ENCODE measurements at regions of chr3 and their contacts with region 1.

Region 1: DNA sequence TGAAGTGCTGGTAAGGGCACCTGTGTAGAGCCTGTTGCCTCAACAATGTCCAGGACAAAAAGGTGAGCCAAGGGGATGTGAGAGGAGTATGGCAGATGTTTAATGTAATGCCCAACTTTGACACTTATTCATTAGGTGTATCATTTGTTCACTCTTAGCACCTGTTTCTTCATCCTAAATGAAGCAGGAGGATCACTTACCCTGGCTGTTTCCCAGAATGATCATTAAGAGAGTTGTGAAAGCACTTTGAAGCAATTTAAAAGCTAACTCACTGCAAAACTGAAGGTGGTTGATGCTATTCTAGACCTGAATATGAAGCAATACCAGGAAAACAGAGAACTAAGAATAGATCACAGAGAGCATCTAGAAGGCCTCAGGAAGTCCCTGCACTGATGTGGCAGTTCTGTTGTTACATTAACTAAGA is 3.4 kb upstream of the HHLA2 start:
- DNase-seq: peak; percentile 45
- H3K4me3 Mint-ChIP-seq: no peak overlapping the region
- H3K27ac Mint-ChIP-seq: peak overlapping the region; percentile 70
- H3K4me1 Mint-ChIP-seq: peaks cover 55% of the 10 kb centered on the region
- H3K27me3 Mint-ChIP-seq: no peaks in the 10 kb centered on the region

Region 2: GRCh38 chr3:107414325-107414964 is 878.5 kb before region 1 on chr3:
- CTCF ChIA-PET with region 1: no interaction called
- intact Hi-C with region 1: loop called (anchors 10 kb)
- DNase-seq: peak; percentile 14
- H3K4me3 Mint-ChIP-seq: no peak overlapping the region
- H3K27ac Mint-ChIP-seq: no peak overlapping the region
- H3K4me1 Mint-ChIP-seq: peaks cover 10% of the 10 kb centered on the region
- H3K27me3 Mint-ChIP-seq: no peaks in the 10 kb centered on the region

Region 3: DNA sequence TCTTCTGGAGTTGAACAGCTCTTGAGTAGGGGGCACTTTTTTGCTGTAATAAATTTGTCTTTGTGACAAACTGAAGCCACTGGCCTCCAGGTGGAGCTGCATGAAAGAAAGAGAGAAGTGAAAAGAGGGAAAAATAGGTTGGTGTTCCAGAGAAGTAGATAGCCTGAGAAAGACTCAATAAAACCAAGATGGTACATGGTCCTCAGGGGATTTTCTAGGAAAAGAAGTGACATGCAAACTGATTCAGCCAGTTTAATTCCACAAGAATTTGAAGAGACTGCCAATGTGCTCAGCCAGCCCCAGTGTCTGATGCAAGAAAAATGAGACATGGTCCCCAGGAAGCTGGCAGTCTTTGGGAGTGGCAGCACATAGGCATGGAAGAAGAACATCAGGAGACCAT is 354.8 kb before region 1 on chr3:
- CTCF ChIA-PET with region 1: no interaction called
- intact Hi-C with region 1: loop called (anchors 1 kb)
- DNase-seq: peak; percentile 21
- H3K4me3 Mint-ChIP-seq: no peak overlapping the region
- H3K27ac Mint-ChIP-seq: no peak overlapping the region
- H3K4me1 Mint-ChIP-seq: peaks cover 20% of the 10 kb centered on the region
- H3K27me3 Mint-ChIP-seq: no peaks in the 10 kb centered on the region

Region 4: GRCh38 chr3:108221911-108222852 is 70.7 kb before region 1 on chr3 and contains the start of gene IFT57:
- CTCF ChIA-PET with region 1: interaction called, 8 read pairs
- intact Hi-C with region 1: loop called (anchors 1 kb)
- DNase-seq: peak; percentile 95
- H3K4me3 Mint-ChIP-seq: peak within 1 kb of the TSS; percentile 97
- H3K27ac Mint-ChIP-seq: peak within 1 kb of the TSS; percentile 97
- H3K4me1 Mint-ChIP-seq: peaks cover 42% of the 10 kb centered on the region
- H3K27me3 Mint-ChIP-seq: no peaks in the 10 kb centered on the region
- total RNA-seq, gene IFT57: 26.2 to 27.7 TPM

Region 5: DNA sequence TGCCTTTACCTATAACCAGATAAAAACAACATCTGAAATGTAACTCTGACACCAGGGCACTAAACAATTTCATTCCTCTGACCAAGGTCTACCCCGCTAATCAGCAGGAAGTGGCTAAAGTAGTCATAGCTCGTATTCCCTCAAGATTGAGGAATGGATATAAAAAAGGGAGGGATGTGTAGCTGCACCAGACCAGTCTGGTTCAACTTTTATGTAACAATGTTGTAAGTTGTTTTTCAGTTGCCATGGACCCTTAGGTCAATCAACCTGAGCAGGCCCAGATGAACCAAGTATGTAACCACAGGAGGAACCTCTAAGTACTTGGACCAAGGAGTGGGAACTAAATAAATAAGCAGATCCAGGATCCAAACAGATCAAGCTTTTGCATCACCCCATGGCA is 42.3 kb before region 1 on chr3:
- CTCF ChIA-PET with region 1: no interaction called
- intact Hi-C with region 1: no loop called
- DNase-seq: no peak
- H3K4me3 Mint-ChIP-seq: no peak overlapping the region
- H3K27ac Mint-ChIP-seq: no peak overlapping the region
- H3K4me1 Mint-ChIP-seq: peaks cover 9% of the 10 kb centered on the region
- H3K27me3 Mint-ChIP-seq: no peaks in the 10 kb centered on the region

Region 6: DNA sequence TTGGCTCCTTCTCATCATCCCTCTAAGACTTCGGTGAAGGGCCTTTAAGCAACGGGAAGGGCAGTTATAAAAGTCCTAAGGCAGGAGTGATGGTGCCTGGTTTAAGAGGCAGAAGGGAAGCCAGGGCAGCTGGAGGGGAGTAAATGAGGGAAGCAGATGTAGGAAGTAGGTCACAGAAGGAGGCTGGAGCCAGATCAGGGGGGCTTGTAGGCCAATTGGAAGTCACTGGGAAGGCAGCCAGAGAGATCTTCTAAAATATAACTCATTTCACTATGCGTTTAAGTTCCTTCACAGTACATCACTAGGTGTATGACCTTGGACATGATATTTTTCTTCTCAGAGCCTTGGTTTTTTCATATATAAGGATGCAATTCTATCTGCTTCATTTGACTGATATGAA is 122.7 kb after region 1 on chr3:
- CTCF ChIA-PET with region 1: no interaction called
- intact Hi-C with region 1: loop called (anchors 1 kb)
- DNase-seq: no peak
- H3K4me3 Mint-ChIP-seq: no peak overlapping the region
- H3K27ac Mint-ChIP-seq: no peak overlapping the region
- H3K4me1 Mint-ChIP-seq: peaks cover 18% of the 10 kb centered on the region
- H3K27me3 Mint-ChIP-seq: peaks cover 12% of the 10 kb centered on the region

Region 7: GRCh38 chr3:109927161-109927560 is 1634.2 kb after region 1 on chr3:
- CTCF ChIA-PET with region 1: no interaction called
- intact Hi-C with region 1: loop called (anchors 5 kb)
- DNase-seq: peak; percentile 58
- H3K4me3 Mint-ChIP-seq: no peak overlapping the region
- H3K27ac Mint-ChIP-seq: no peak overlapping the region
- H3K4me1 Mint-ChIP-seq: peaks cover 12% of the 10 kb centered on the region
- H3K27me3 Mint-ChIP-seq: peaks cover 2% of the 10 kb centered on the region